GM10248 (cell line): ENCODE measurements at regions of chr1 and their contacts with region 1.

Region 1: GRCh38 chr1:198620951-198621824 is 17.7 kb upstream of the PTPRC start:
- DNase-seq: peak; percentile 27
- CTCF ChIP-seq: no peak

Region 2: DNA sequence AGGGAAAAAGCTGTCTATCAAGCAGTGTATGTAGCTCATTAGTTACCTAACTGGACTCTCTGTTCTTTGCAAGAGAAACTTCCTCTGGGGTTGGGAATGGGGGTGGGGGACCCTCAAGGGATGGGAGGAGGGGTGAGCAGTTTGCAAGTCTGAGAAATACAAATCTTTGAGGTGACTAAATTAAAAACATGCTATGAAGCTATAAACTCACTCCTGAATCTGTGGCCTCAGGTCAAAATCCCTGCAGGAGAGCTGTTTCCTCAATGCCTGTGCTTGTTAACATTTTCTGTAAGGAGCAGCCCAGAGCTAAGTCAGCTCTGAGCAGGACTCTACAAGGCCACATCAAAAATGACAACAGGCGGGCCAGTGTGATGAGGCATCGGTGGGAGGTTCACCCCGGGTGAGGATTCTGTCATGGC is 15.2 kb before region 1 on chr1:
- CTCF ChIA-PET with region 1: interaction called, 50 read pairs
- POLR2A ChIA-PET with region 1: interaction called, 4 read pairs
- DNase-seq: no peak
- CTCF ChIP-seq: no peak

Region 3: GRCh38 chr1:198638441-198638840 is 17.3 kb after region 1 on chr1:
- CTCF ChIA-PET with region 1: interaction called, 24 read pairs
- POLR2A ChIA-PET with region 1: no interaction called
- DNase-seq: no peak
- CTCF ChIP-seq: no peak

Region 4: DNA sequence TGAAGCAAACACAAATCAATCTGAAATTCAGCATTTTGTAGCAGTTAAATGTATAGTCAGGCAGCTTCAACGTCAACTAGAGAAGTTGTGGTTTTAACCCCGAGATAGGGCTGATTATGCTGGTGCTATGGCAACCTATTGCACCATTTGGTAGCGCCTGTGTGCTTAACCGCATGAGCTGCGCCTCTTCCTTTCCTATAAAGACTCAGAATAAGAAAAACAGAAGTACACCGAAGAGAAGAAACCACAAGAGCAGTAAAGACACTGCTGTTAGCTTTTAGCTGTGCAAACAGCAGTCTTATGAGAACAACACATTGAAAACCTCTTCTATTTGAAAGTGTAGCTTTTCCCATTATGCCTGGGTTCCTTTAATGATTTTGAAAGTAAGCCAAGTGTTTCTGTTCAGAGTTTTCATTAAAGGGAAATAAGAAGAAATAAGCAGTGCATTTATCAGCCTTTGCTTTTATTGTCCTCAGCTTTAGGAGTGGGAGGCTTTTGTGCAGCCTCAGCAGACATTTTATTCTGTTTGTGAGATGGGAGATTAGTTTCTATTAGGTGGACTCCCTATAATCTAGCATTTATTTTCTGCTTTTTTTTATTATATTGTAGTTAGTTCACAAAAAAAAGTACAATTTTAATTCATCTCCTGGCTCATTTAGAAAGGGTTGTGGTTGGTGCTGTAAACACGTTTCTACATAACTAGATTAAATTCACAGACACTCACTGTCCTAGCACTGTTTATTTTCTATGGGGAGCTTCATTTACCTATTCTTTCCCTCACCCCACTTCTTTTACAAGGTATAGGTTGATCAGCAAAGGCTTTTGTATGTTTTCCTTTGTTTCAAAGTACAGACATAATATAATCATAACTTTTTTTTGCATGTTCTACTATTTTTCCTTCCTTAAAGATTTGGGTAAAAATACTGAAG is 60.9 kb after region 1 on chr1:
- CTCF ChIA-PET with region 1: interaction called, 18 read pairs
- POLR2A ChIA-PET with region 1: interaction called, 3 read pairs
- DNase-seq: peak; percentile 62
- CTCF ChIP-seq: no peak